ENCODE measurements at regions of chr12 and their contacts with region 1.

Region 1: DNA sequence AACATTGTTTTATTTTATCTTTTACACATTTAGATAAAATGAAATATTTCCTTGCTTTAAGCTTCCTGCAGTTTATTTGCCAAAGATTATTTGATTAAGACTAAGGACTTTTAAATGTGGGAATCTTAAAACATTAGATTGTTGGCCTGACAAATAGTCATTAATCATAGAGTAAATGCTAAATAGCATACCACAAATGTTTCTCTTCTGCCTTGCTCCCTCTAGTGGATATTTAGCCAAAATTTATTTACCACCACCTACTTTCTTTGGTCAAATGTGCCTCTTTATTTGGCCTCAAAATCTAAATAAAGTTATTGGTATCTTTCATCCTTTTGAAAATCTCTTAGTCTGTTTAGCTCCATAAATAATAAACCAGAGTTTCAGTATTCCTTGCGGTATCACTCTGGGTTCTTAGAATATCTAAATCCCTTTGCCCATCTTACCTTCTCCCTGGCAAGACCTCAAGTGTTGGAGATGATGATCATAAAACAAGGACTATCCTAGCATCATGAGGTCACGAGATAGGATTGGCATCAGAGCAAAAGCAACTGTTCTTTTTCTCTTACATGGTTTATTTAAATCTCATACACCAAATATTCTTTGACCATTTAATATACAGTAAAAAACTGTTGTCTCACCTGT is 150.6 kb upstream of the AEBP2 start:
- DNase-seq: peak in 2 of 9 donors; percentile 8 to 12
- ATAC-seq: no peak
- H3K4me3 ChIP-seq: no peak overlapping the region
- H3K4me3 Mint-ChIP-seq: no peak overlapping the region
- H3K27ac ChIP-seq: no peak overlapping the region
- H3K27ac Mint-ChIP-seq: no peak overlapping the region
- H3K4me1 ChIP-seq: no peaks in the 10 kb centered on the region
- H3K4me1 Mint-ChIP-seq: no peaks in the 10 kb centered on the region
- H3K27me3 ChIP-seq: no peaks in the 10 kb centered on the region
- H3K27me3 Mint-ChIP-seq: peaks cover 0 to 4% (median 0%) of the 10 kb centered on the region in 5 donors

Region 2: DNA sequence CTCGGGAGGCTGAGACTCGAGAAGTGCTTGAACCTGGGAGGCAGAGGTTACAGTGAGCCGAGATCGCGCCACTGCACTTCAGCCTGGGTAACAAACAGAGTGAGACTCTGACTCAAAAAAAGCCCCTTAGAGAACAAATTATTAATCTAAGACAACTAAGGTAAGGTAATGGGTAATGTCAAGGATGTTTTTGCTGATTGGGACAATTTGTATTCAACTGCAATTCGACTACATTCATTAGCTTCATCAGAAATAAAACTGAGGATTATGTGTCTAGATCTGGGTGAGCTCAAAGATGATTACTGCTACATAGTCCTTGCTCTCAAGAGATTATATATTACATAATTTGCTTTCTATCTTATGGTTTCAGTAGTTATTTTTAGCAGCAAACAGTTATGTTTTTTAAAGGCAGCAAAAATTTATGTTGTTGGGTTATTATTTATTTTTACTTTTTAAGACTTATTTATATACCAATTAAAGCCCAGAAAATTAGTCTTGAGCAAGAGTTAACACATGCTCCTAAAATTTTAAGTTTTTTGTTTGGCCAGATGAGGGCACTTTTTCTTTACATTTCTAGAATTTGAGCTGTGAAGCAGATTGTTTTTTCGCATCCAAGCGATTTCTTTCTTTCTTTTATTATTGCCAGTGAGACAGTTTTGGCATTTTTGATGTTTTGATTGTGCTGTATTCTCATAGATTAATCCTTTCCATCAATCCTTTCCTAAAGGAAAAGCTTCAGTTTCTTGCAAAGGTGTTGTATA is 106.9 kb before region 1 on chr12:
- CTCF ChIA-PET with region 1: no interaction called
- POLR2A ChIA-PET with region 1: no interaction called
- intact Hi-C with region 1: loop called (anchors 2 to 5 kb)
- DNase-seq: no peak
- ATAC-seq: no peak
- H3K4me3 ChIP-seq: no peak overlapping the region
- H3K4me3 Mint-ChIP-seq: no peak overlapping the region
- H3K27ac ChIP-seq: no peak overlapping the region
- H3K27ac Mint-ChIP-seq: no peak overlapping the region
- H3K4me1 ChIP-seq: no peaks in the 10 kb centered on the region
- H3K4me1 Mint-ChIP-seq: no peaks in the 10 kb centered on the region
- H3K27me3 ChIP-seq: no peaks in the 10 kb centered on the region
- H3K27me3 Mint-ChIP-seq: peaks cover 0 to 13% (median 4%) of the 10 kb centered on the region in 5 donors

Region 3: GRCh38 chr12:19421503-19422282 is 133.0 kb after region 1 on chr12:
- CTCF ChIA-PET with region 1: no interaction called
- POLR2A ChIA-PET with region 1: no interaction called
- intact Hi-C with region 1: no loop called
- DNase-seq: peak in 1 of 9 donors; percentile 9
- ATAC-seq: no peak
- H3K4me3 ChIP-seq: no peak overlapping the region
- H3K4me3 Mint-ChIP-seq: no peak overlapping the region
- H3K27ac ChIP-seq: no peak overlapping the region
- H3K27ac Mint-ChIP-seq: peak overlapping the region in 2 of 9 donors; percentile 36 to 84
- H3K4me1 ChIP-seq: no peaks in the 10 kb centered on the region
- H3K4me1 Mint-ChIP-seq: peaks cover 0 to 10% (median 5%) of the 10 kb centered on the region in 7 donors
- H3K27me3 ChIP-seq: no peaks in the 10 kb centered on the region
- H3K27me3 Mint-ChIP-seq: no peaks in the 10 kb centered on the region